ENCODE measurements at regions of chr2 and their contacts with region 1.

Region 1: DNA sequence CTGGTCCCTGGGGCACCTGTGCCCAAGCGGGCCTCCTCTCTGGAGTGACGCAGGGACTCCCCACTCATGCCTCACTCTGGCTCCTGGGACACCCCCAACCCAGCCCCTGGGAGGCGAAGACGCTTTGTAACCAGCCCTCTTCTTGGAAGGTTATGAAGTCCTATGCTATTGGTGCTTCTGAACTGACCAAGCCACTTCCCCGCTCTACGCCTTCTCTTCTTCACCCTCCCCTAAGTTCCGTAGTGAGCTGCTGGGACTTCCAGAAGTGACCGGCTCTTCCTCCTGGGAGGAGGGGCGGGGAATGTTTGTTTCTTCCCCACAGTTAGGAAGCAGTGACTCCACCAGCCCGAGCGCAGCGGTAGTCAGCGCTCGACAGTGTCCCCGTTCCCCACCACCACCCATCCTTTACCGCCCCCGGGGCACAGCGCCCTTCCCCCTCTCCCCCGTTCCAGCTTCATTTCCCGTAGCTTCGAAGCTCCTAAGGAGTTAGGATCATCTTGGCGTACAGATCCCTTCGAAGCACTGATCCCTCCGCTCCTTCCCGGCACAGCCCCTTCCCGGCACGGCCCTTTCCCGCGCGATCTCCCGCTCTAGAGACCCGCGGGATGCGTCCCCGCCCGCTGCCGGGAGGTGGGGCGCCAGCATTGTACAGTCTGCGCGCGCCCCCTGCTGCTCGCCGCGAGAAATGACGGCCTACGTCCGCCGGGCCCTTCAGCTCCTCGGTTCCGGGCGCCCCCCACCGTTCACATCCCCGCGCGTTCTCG is 25.3 kb upstream of the NOTO start:
- DNase-seq: peak; percentile 82 to 87 (median 85)
- H3K4me3 ChIP-seq: peak overlapping the region; percentile 53 to 65
- H3K4me3 Mint-ChIP-seq: peak overlapping the region; percentile 80 to 92 (median 90)
- H3K27ac ChIP-seq: no peak overlapping the region
- H3K27ac Mint-ChIP-seq: peak overlapping the region in 5 of 7 donors; percentile 36 to 90 (median 60)
- H3K4me1 ChIP-seq: peaks cover 23% of the 10 kb centered on the region
- H3K4me1 Mint-ChIP-seq: peaks cover 11 to 21% (median 15%) of the 10 kb centered on the region in 4 donors
- H3K27me3 ChIP-seq: peaks cover 17% of the 10 kb centered on the region
- H3K27me3 Mint-ChIP-seq: peaks cover 10 to 31% of the 10 kb centered on the region in 2 donors

Region 2: GRCh38 chr2:72770879-72771461 is 406.1 kb before region 1 on chr2:
- CTCF ChIA-PET with region 1: no interaction called
- POLR2A ChIA-PET with region 1: no interaction called
- intact Hi-C with region 1: loop called (anchors 2 kb)
- DNase-seq: peak; percentile 65 to 69 (median 67)
- H3K4me3 ChIP-seq: no peak overlapping the region
- H3K4me3 Mint-ChIP-seq: no peak overlapping the region
- H3K27ac ChIP-seq: no peak overlapping the region
- H3K27ac Mint-ChIP-seq: no peak overlapping the region
- H3K4me1 ChIP-seq: no peaks in the 10 kb centered on the region
- H3K4me1 Mint-ChIP-seq: no peaks in the 10 kb centered on the region
- H3K27me3 ChIP-seq: no peaks in the 10 kb centered on the region
- H3K27me3 Mint-ChIP-seq: no peaks in the 10 kb centered on the region

Region 3: GRCh38 chr2:73018188-73018825 is 158.8 kb before region 1 on chr2:
- CTCF ChIA-PET with region 1: no interaction called
- POLR2A ChIA-PET with region 1: no interaction called
- intact Hi-C with region 1: no loop called
- DNase-seq: no peak
- H3K4me3 ChIP-seq: no peak overlapping the region
- H3K4me3 Mint-ChIP-seq: no peak overlapping the region
- H3K27ac ChIP-seq: no peak overlapping the region
- H3K27ac Mint-ChIP-seq: no peak overlapping the region
- H3K4me1 ChIP-seq: no peaks in the 10 kb centered on the region
- H3K4me1 Mint-ChIP-seq: no peaks in the 10 kb centered on the region
- H3K27me3 ChIP-seq: no peaks in the 10 kb centered on the region
- H3K27me3 Mint-ChIP-seq: peaks cover 0 to 1% of the 10 kb centered on the region in 2 donors

Region 4: DNA sequence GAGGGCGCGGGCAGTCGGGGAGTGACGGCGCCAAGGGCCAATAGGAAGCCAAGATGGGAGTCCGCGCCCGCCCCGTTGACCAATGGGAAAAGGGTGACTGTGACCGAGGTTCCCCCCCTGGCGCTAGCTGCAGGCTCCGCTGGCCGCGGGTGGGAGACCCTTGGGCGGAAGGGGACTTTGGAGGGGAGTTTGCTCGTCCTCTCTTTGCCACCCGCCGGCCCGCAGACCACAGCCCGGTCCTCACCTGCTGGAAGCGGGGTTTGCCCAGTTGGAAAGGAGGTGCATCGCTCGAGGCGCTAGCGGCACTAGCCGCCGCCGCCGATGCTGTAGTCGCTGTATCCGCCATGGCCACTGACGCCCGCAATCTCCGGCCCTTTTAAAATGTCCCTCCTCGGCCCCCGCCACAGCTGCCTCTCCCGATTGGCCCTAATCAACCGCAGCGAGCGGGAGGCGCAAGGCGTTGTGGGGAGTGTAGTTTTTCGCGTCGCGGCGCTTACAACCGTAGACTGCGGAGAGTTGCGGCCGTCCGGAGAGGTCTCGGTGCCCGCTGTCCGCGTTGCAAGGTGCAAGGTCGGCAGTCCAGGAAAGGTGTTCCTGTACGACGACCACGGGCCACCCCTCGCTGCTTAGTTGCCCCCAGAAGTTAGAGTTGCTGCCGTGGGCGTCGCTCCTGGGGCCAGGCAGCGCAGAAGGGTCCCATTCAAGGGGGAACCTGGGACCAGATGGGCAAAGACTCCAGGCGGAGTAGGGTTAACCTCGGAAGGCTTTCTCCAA is 105.5 kb before region 1 on chr2 and contains the start of gene SFXN5:
- CTCF ChIA-PET with region 1: interaction called, 15 read pairs
- POLR2A ChIA-PET with region 1: interaction called, 7 read pairs
- intact Hi-C with region 1: loop called (anchors 1 kb)
- DNase-seq: peak; percentile 90 to 95 (median 90)
- H3K4me3 ChIP-seq: peak within 1 kb of the TSS; percentile 88 to 90
- H3K4me3 Mint-ChIP-seq: peak within 1 kb of the TSS; percentile 91 to 96 (median 94)
- H3K27ac ChIP-seq: peak within 1 kb of the TSS; percentile 65
- H3K27ac Mint-ChIP-seq: peak within 1 kb of the TSS; percentile 91 to 97 (median 93)
- H3K4me1 ChIP-seq: peaks cover 14% of the 10 kb centered on the region
- H3K4me1 Mint-ChIP-seq: peaks cover 17 to 47% (median 20%) of the 10 kb centered on the region in 4 donors
- H3K27me3 ChIP-seq: no peaks in the 10 kb centered on the region
- H3K27me3 Mint-ChIP-seq: peaks cover 0 to 1% of the 10 kb centered on the region in 2 donors
- total RNA-seq, gene SFXN5: 6.5 to 10.0 TPM

Region 5: GRCh38 chr2:73107211-73107926 is 69.7 kb before region 1 on chr2:
- CTCF ChIA-PET with region 1: interaction called, 13 read pairs
- POLR2A ChIA-PET with region 1: interaction called, 8 read pairs
- intact Hi-C with region 1: no loop called
- DNase-seq: peak in 1 of 5 donors; percentile 20
- H3K4me3 ChIP-seq: no peak overlapping the region
- H3K4me3 Mint-ChIP-seq: peak overlapping the region in 3 of 8 donors; percentile 14 to 64 (median 57)
- H3K27ac ChIP-seq: no peak overlapping the region
- H3K27ac Mint-ChIP-seq: peak overlapping the region in 6 of 7 donors; percentile 8 to 87 (median 72)
- H3K4me1 ChIP-seq: peaks cover 56% of the 10 kb centered on the region
- H3K4me1 Mint-ChIP-seq: peaks cover 36 to 79% (median 53%) of the 10 kb centered on the region in 4 donors
- H3K27me3 ChIP-seq: no peaks in the 10 kb centered on the region
- H3K27me3 Mint-ChIP-seq: no peaks in the 10 kb centered on the region

Region 6: GRCh38 chr2:73187549-73187948 is 10.5 kb after region 1 on chr2:
- CTCF ChIA-PET with region 1: interaction called, 28 read pairs
- POLR2A ChIA-PET with region 1: no interaction called
- intact Hi-C with region 1: no loop called
- DNase-seq: no peak
- H3K4me3 ChIP-seq: no peak overlapping the region
- H3K4me3 Mint-ChIP-seq: no peak overlapping the region
- H3K27ac ChIP-seq: no peak overlapping the region
- H3K27ac Mint-ChIP-seq: no peak overlapping the region
- H3K4me1 ChIP-seq: no peaks in the 10 kb centered on the region
- H3K4me1 Mint-ChIP-seq: no peaks in the 10 kb centered on the region
- H3K27me3 ChIP-seq: no peaks in the 10 kb centered on the region
- H3K27me3 Mint-ChIP-seq: peaks cover 4 to 10% of the 10 kb centered on the region in 2 donors

Region 7: DNA sequence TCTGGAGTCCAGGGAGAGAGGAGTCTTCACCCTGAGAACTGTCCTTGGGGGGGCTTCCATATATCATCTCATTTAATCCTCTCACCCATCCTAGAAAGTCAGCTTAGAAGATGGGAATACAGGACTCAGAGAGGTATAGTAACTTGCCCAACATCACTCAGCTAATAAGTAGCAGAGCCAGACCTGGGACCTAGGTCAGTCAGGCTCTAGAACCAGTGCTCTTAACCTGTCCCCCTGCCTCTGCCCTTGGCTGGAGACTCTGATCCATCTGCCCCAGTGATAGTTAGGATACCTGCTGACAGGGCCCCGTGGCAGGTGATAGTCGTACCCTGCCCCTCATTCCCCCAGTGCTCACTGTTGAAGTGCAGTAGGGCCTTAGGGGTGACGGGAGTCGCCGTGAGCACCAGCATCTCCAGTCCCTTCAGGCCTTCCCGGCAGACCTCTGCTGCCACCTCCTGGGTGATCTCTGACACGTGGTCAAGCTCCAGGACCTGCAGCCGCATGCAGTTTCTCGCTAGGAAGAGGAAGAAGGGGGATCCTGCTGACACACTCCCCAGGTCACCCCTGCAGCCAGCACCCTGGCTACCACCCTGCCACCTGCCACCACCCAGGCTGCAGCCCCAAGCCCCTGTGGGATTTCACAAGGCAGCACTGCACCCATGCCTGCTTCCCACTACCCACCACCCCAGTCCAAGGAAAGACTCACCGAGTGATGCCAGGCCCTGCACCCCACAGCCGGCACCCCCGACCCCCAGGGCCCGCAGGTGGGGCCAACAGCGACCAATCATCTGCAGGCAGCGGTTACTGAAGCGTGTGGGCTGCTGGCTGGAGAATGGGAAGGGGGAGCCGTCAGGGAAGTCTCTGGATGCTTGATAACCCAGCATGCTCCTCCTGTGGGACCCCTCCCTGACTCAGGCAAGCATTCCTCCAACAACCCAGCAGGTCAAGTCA is 83.2 kb after region 1 on chr2:
- CTCF ChIA-PET with region 1: no interaction called
- POLR2A ChIA-PET with region 1: no interaction called
- intact Hi-C with region 1: no loop called
- DNase-seq: no peak
- H3K4me3 ChIP-seq: no peak overlapping the region
- H3K4me3 Mint-ChIP-seq: no peak overlapping the region
- H3K27ac ChIP-seq: no peak overlapping the region
- H3K27ac Mint-ChIP-seq: no peak overlapping the region
- H3K4me1 ChIP-seq: peaks cover 8% of the 10 kb centered on the region
- H3K4me1 Mint-ChIP-seq: peaks cover 1 to 21% (median 5%) of the 10 kb centered on the region in 4 donors
- H3K27me3 ChIP-seq: no peaks in the 10 kb centered on the region
- H3K27me3 Mint-ChIP-seq: no peaks in the 10 kb centered on the region

Region 8: GRCh38 chr2:73314441-73314840 is 137.4 kb after region 1 on chr2:
- CTCF ChIA-PET with region 1: no interaction called
- POLR2A ChIA-PET with region 1: no interaction called
- intact Hi-C with region 1: no loop called
- DNase-seq: no peak
- H3K4me3 ChIP-seq: no peak overlapping the region
- H3K4me3 Mint-ChIP-seq: no peak overlapping the region
- H3K27ac ChIP-seq: no peak overlapping the region
- H3K27ac Mint-ChIP-seq: no peak overlapping the region
- H3K4me1 ChIP-seq: no peaks in the 10 kb centered on the region
- H3K4me1 Mint-ChIP-seq: no peaks in the 10 kb centered on the region
- H3K27me3 ChIP-seq: no peaks in the 10 kb centered on the region
- H3K27me3 Mint-ChIP-seq: peaks cover 22 to 28% of the 10 kb centered on the region in 2 donors